GM10248 (cell line): ENCODE measurements at regions of chr6 and their contacts with region 1.

Region 1: DNA sequence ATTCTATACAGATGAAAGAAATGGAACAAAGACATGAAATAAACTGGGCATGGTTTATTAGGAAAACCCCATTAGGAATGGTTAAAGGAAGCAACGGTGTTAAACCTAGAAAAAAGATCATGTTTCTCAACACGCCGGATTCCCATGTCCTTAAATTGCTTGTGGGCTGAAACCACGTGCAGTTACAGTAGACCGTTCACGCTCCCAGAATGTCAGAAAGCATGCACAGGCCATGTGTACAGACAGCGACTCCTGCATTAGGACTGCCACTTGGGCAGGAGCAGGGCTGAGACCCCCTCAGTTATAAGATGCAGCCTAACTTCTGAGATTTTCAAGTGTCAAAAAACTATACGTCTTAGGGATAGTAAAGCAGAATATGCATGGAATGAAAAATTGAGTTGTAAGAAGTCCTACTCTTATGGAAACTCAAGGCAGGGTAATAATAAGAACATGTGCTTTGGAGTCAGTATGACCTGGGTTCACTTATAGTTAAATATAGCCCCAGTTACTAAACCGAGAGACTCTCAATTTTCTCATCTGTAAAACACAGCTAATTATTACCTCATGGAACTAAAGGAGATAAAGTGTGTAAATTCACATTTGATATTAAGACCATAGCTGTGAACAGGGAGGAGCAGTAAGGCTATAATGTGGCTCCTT is 174.0 kb upstream of the UST start:
- DNase-seq: no peak
- CTCF ChIP-seq: no peak

Region 2: GRCh38 chr6:147567141-147567805 is 1005.5 kb before region 1 on chr6:
- CTCF ChIA-PET with region 1: no interaction called
- POLR2A ChIA-PET with region 1: no interaction called
- DNase-seq: no peak
- CTCF ChIP-seq: no peak

Region 3: DNA sequence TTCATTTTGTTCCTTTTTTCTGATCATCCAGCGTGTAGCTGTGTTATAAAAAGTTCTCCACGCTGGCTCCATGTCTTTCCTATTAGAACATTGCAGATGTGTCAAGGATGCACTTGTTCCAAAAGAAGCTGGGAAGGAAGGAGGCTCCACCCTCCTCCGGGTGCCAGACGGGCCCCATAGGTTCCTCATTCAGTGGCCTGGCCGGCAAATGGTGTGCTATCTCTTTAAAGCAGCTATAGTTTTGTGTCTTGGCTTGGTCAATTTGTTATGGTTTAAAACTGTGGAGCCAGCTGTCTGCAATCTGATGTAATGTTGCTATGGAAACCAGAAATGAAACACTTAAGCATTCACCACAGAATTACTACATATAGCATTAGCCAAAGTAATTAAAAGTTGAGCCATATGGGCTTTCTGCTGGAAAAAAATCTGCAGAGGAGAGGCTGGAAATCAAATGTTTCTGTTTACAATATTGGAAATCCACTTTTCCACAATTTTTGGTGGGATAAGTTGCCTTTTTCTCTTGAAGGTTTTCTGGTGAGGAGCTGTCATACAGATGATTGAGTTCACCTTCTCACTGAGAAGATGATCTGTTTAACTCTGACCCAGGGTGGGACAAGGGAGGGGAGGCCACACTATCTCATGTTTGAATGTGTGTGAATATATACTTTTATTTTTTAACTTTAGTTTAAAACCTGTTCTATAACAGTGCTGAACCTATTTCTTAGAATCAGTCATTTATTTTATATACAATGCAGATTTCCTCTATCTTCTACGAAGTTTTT is 62.8 kb before region 1 on chr6:
- CTCF ChIA-PET with region 1: no interaction called
- POLR2A ChIA-PET with region 1: no interaction called
- DNase-seq: peak; percentile 46
- CTCF ChIP-seq: no peak

Region 4: GRCh38 chr6:148559848-148560433 is 12.9 kb before region 1 on chr6:
- CTCF ChIA-PET with region 1: interaction called, 45 read pairs
- POLR2A ChIA-PET with region 1: no interaction called
- DNase-seq: peak; percentile 85
- CTCF ChIP-seq: peak; percentile 98

Region 5: DNA sequence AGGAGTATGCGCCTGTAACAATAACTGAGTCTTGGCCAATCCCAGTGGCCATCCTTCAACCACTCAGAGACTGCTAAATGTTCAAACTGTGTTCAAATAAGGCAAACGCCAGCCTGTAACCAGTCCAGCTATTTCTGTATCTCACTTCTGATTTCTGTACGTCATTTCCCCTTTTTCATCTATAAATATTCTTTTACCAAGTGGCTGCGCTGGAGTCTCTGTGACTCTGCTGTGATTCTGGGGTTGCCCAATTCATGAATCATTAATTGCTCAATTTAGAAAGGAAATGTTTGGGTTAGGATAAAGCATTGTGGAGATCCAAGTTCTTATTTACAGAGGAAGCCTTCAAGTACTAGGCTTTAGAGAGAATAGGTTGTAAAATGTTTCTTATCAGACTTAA is 84.2 kb after region 1 on chr6:
- CTCF ChIA-PET with region 1: no interaction called
- POLR2A ChIA-PET with region 1: no interaction called
- DNase-seq: no peak
- CTCF ChIP-seq: no peak